Activated CD4-positive, alpha-beta T cell treated with anti-CD3 and anti-CD28 coated beads for 36 hours (primary cell): ENCODE measurements at regions of chr13 and their contacts with region 1.

Region 1: GRCh38 chr13:31909864-31910551 is 121.6 kb upstream of the FRY start:
- DNase-seq: peak; percentile 69
- ATAC-seq: no peak
- H3K4me3 Mint-ChIP-seq: no peak overlapping the region
- H3K27ac Mint-ChIP-seq: no peak overlapping the region
- H3K4me1 Mint-ChIP-seq: no peaks in the 10 kb centered on the region
- H3K27me3 Mint-ChIP-seq: peaks cover 4% of the 10 kb centered on the region

Region 2: GRCh38 chr13:31896427-31896826 is 13.6 kb before region 1 on chr13:
- CTCF ChIA-PET with region 1: interaction called, 13 read pairs
- POLR2A ChIA-PET with region 1: no interaction called
- intact Hi-C with region 1: no loop called
- DNase-seq: no peak
- ATAC-seq: no peak
- H3K4me3 Mint-ChIP-seq: no peak overlapping the region
- H3K27ac Mint-ChIP-seq: no peak overlapping the region
- H3K4me1 Mint-ChIP-seq: peaks cover 13% of the 10 kb centered on the region
- H3K27me3 Mint-ChIP-seq: peaks cover 2% of the 10 kb centered on the region

Region 3: DNA sequence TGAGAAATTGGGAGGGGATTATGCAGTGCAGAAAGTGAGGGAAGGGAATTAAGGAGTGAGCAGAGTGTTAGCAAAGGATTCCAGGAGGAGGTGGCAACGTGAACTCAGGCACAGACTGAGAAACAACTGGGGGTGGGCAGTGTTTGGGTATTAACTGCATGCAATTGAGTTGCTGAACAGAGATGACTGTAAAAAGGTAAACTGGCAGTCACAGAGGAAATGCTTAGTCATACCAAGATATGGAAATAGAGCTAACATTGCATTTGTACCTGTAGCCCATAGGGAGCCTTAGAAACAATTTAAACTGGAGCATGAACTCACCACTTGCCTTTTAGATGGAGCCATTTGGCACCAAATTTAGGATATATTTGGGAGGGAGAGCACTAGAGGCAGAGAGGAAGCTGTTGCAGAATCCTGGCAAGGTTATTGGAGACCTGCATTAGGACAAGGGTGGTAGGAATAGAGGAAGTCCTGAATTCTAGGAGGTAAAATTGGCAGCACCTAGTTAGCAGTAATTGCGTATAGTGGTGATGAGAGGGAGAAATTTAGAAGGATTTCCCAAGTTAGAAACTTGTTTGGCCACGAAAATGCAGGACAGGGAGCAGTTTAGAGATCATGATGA is 21.0 kb after region 1 on chr13:
- CTCF ChIA-PET with region 1: interaction called, 41 read pairs
- POLR2A ChIA-PET with region 1: no interaction called
- intact Hi-C with region 1: no loop called
- DNase-seq: peak; percentile 43
- ATAC-seq: peak; percentile 92
- H3K4me3 Mint-ChIP-seq: no peak overlapping the region
- H3K27ac Mint-ChIP-seq: no peak overlapping the region
- H3K4me1 Mint-ChIP-seq: peaks cover 5% of the 10 kb centered on the region
- H3K27me3 Mint-ChIP-seq: no peaks in the 10 kb centered on the region

Region 4: DNA sequence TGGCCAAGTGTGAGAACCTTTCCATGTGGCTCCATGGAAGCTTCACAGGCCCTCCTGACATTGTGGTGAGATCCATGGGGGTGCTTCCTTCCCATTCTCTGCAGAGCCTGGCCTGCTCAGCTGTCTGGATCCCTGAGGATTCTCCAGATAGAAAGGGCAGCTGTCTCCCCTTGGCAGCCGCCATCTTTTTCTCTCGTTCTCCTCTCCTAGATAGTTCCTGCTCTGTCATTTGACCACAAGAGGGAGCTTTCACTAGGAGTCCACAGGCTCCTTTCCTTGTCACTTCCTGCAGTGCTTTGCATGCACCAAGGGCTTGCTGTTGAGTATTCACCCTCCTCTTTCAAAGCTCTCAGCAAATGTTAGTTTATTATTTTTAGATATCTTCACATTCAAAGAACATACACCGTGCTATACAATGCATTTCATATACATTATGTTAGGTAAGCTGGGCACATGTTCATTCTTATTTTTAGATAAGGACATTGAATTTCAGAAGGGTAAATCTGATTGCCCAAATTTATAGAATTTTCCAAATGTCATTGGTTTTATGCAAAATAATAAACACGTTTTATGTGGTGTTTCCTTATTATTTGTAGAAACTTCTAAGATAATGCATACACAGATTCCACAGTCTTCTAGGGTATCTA is 254.7 kb after region 1 on chr13:
- CTCF ChIA-PET with region 1: interaction called, 11 read pairs
- POLR2A ChIA-PET with region 1: no interaction called
- intact Hi-C with region 1: no loop called
- DNase-seq: peak; percentile 37
- ATAC-seq: peak; percentile 87
- H3K4me3 Mint-ChIP-seq: no peak overlapping the region
- H3K27ac Mint-ChIP-seq: no peak overlapping the region
- H3K4me1 Mint-ChIP-seq: no peaks in the 10 kb centered on the region
- H3K27me3 Mint-ChIP-seq: no peaks in the 10 kb centered on the region

Region 5: GRCh38 chr13:32315238-32316027 is 405.4 kb after region 1 on chr13 and contains the starts of genes BRCA2 and ZAR1L:
- CTCF ChIA-PET with region 1: interaction called, 13 read pairs
- POLR2A ChIA-PET with region 1: no interaction called
- intact Hi-C with region 1: loop called in 1 of 2 experiments (anchors 1 kb)
- DNase-seq: peak; percentile 94
- ATAC-seq: peak; percentile 95
- H3K4me3 Mint-ChIP-seq: peak within 1 kb of the TSS; percentile 92
- H3K27ac Mint-ChIP-seq: peak within 1 kb of the TSS; percentile 100
- H3K4me1 Mint-ChIP-seq: peaks cover 9% of the 10 kb centered on the region
- H3K27me3 Mint-ChIP-seq: no peaks in the 10 kb centered on the region
- total RNA-seq, gene BRCA2: 34.1 to 49.0 TPM
- total RNA-seq, gene ZAR1L: not detected

Region 6: DNA sequence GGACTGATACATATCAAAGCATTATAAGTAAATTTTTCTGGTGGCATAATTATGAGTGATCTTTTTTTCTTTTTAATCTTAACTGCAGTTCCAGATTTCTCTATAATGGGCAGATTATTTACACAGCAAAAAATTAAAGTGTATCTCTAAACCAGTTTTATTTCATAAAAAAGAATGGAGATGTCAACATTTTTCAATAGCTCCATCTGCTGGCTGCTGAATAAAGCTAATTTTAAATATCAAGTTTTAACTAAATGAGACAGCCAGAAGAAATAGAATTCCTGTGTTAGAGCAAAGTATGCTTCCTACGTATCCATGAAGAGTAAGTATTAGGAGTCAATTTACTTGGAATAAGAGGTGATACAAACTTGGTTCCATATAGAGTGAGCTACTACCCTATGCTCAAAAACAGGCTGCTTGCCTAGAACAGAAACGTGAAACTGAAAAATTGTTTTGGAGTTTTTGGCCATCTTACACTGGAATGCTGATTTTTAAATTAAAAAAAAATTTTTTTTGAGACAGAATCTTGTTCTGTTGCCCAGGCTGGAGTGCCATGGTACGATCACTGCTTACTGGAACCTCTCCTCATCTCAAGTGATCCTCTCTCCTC is 671.3 kb after region 1 on chr13:
- CTCF ChIA-PET with region 1: interaction called, 18 read pairs
- POLR2A ChIA-PET with region 1: no interaction called
- intact Hi-C with region 1: loop called in 1 of 2 experiments (anchors 2 kb)
- DNase-seq: no peak
- ATAC-seq: no peak
- H3K4me3 Mint-ChIP-seq: no peak overlapping the region
- H3K27ac Mint-ChIP-seq: no peak overlapping the region
- H3K4me1 Mint-ChIP-seq: peaks cover 8% of the 10 kb centered on the region
- H3K27me3 Mint-ChIP-seq: peaks cover 3% of the 10 kb centered on the region